ENCODE measurements at regions of chr4 and their contacts with region 1.

Region 1: GRCh38 chr4:140851032-140851636 is 94.9 kb upstream of the TBC1D9 start:
- DNase-seq: peak; percentile 65
- ATAC-seq: peak; percentile 91
- H3K4me3 ChIP-seq: no peak overlapping the region
- H3K27ac ChIP-seq: no peak overlapping the region
- H3K4me1 ChIP-seq: peaks cover 2 to 3% of the 10 kb centered on the region in 2 experiments; a peak in 3 of 4 replicates
- H3K27me3 ChIP-seq: no peaks in the 10 kb centered on the region
- CTCF ChIP-seq: peak; percentile 71 to 86 (median 82); a peak in 5 of 6 replicates
- POLR2A ChIP-seq: no peak
- RAD21 ChIP-seq: peak; percentile 96

Region 2: DNA sequence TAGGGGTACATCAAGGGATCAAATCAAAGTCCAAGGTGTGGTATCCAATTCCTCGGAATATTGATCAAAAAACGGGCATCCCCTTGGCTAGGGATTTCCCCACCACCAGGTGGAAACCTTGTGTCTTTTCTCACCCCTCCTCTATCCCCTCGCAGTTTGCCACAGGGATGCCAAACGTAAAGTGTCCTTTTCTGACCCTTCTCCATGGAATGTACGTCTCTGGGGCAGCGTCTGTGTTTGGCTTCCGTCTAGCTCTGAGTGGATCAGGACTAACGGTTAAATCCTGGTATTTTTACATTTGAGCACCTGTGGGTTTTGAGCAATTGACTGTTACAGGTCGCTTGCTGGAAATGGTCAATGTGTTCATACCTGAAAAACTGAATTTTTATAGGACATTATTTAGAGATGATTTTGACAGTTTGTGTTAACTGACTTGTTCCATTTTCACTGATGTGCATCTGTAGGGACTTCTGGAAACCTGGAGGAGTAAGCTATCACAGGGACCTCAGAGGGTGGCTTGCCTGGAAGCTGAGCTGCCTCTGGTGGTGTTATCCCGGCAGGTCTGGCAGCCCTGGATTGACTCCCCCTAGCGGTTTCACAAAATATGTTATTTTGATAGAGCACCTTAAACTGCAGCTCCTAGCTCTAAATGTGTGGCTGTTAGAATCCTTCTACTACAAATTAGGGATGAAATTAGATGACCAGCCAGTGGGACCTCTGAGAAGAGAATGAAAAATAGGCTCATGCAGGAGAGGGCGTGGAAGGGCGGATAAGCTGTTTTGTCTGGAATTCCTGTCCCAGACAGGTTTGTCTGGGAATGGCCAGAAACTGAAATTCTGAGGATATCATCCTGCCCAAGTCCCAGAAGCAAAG is 1194.3 kb before region 1 on chr4:
- CTCF ChIA-PET with region 1: interaction called, 4 read pairs
- POLR2A ChIA-PET with region 1: no interaction called
- RAD21 ChIA-PET with region 1: no interaction called
- intact Hi-C with region 1: loop called (anchors 2 kb)
- DNase-seq: peak; percentile 74
- ATAC-seq: peak; percentile 90
- H3K4me3 ChIP-seq: peak overlapping the region; percentile 26 to 39
- H3K27ac ChIP-seq: no peak overlapping the region
- H3K4me1 ChIP-seq: peaks cover 3 to 22% of the 10 kb centered on the region in 2 experiments; a peak in 3 of 4 replicates
- H3K27me3 ChIP-seq: no peaks in the 10 kb centered on the region
- CTCF ChIP-seq: peak; percentile 77 to 93 (median 92)
- POLR2A ChIP-seq: no peak
- RAD21 ChIP-seq: peak; percentile 72

Region 3: DNA sequence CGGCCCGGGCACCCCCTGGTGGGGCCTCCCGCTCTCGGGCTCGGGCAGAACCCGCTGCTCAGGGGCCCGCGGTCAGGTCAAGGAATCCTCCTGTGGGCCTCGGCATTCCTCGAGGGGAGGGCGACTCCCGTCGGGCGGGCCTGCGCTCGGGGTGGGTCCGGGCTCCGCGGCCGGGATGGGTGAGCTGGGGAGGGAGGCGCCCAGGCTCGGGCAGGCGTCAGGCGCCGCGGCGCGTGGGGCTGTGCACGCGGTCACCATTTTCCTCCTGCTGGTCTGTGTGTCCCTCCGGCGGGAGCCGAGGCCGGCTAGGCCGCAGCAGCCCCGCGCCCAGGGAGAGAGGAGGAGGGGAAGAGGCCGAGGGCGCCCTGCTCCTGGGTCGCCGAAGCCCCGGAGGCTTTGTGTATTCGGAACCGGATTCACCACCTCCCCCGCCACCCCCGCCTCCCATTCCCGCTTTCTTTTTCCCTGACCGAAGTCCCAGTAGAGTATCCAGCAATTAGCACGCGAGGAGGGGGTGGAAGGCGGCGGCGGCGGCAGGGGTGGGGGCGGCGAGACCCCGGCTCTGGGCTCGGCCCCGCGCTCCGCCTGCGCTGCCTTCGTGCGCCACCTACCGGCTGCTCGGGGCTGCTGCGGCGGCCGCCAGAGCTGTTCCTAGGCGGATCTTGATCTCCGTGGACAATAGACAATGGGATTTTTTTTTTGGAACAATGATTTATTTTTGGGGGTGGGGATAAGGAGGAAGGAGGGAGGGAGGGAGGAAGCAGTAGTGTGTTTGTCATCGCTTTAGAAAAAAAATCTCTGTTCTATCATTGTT is 598.2 kb before region 1 on chr4:
- CTCF ChIA-PET with region 1: no interaction called
- POLR2A ChIA-PET with region 1: no interaction called
- RAD21 ChIA-PET with region 1: no interaction called
- intact Hi-C with region 1: loop called (anchors 10 kb)
- DNase-seq: peak; percentile 43
- ATAC-seq: peak; percentile 85
- H3K4me3 ChIP-seq: peak overlapping the region; percentile 43 to 56
- H3K27ac ChIP-seq: peak overlapping the region; percentile 51; the same call in 1 of the 2 replicates
- H3K4me1 ChIP-seq: peaks cover 2 to 47% of the 10 kb centered on the region in 2 experiments; a peak in 3 of 4 replicates
- H3K27me3 ChIP-seq: no peaks in the 10 kb centered on the region
- CTCF ChIP-seq: peak; percentile 53 to 92 (median 76); a peak in 5 of 6 replicates
- POLR2A ChIP-seq: no peak
- RAD21 ChIP-seq: peak; percentile 85

Region 4: DNA sequence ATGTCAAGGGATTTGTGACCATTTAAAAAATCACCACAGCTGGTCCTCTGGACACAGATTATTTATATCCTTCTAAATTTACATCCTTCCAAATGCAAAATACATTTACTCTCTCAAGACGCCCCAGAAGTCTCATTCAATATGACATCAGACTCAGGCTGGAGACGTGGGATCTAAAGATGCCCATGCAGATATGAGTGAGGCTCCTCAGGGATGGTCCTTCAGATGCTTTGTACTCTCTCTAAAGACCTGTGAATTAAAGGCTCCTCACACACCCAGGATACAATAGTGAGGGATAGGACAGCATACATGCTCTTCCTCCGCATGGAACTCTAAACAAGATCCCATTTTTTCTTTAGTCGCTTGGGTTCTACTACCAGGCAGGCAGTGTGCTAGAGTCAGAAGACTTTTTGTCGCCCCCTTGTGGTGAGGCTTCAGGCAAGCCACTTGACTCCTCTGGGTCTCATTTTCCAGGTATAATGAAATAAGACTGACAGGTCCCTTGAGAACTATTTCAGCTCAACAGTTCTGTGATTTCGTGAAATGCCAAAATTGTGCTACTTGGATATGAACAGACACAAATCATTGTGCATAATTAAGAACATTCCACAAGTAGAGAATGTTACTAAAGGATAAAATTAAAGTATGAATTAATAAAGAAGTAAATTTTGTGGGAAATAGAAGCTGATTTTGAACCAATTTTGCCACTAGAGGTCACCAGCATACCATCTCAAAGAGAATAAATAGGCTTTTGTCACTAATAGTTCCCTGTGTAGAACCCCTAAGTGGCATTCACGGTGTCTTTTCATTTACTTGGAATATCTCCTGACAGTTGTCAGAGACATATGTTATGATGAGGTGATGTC is 491.3 kb before region 1 on chr4:
- CTCF ChIA-PET with region 1: interaction called, 23 read pairs
- POLR2A ChIA-PET with region 1: no interaction called
- RAD21 ChIA-PET with region 1: interaction called, 3 to 6 read pairs
- intact Hi-C with region 1: loop called (anchors 1 kb)
- DNase-seq: peak; percentile 83
- ATAC-seq: peak; percentile 99
- H3K4me3 ChIP-seq: no peak overlapping the region
- H3K27ac ChIP-seq: no peak overlapping the region
- H3K4me1 ChIP-seq: no peaks in the 10 kb centered on the region
- H3K27me3 ChIP-seq: no peaks in the 10 kb centered on the region
- CTCF ChIP-seq: peak; percentile 87 to 97 (median 93)
- POLR2A ChIP-seq: no peak
- RAD21 ChIP-seq: peak; percentile 64

Region 5: GRCh38 chr4:140595065-140595464 is 256.1 kb before region 1 on chr4:
- CTCF ChIA-PET with region 1: interaction called, 13 read pairs
- POLR2A ChIA-PET with region 1: no interaction called
- RAD21 ChIA-PET with region 1: no interaction called
- intact Hi-C with region 1: loop called (anchors 1 kb)
- DNase-seq: peak; percentile 37
- ATAC-seq: peak; percentile 100
- H3K4me3 ChIP-seq: no peak overlapping the region
- H3K27ac ChIP-seq: no peak overlapping the region
- H3K4me1 ChIP-seq: 0 out of 4 replicates have a peak, but pooled peaks cover 0 to 4% of the 10 kb centered on the region in 2 experiments
- H3K27me3 ChIP-seq: no peaks in the 10 kb centered on the region
- CTCF ChIP-seq: peak; percentile 68 to 77 (median 72); a peak in 5 of 6 replicates
- POLR2A ChIP-seq: no peak
- RAD21 ChIP-seq: peak; percentile 76

Region 6: DNA sequence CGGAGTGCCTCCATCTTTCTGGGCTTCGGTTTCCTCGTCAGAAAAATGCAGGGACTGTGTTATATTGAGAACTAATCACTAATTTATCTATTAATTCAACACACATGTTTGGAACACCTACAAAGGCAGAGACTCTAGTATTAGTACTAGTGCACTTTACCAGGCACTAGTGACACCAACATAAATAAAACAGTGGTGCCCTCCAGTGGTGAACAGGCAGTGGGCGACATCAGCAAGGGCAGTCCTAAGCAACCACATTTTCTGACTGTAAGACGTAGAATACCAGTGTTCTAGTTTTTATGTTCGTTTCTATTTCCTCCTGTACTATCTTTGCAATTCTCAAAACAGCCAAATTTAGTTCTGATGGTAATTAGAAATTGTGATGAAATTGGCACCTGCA is 213.3 kb before region 1 on chr4:
- CTCF ChIA-PET with region 1: no interaction called
- POLR2A ChIA-PET with region 1: no interaction called
- RAD21 ChIA-PET with region 1: no interaction called
- intact Hi-C with region 1: loop called (anchors 2 kb)
- DNase-seq: peak; percentile 35
- ATAC-seq: peak; percentile 86
- H3K4me3 ChIP-seq: no peak overlapping the region
- H3K27ac ChIP-seq: no peak overlapping the region
- H3K4me1 ChIP-seq: peaks cover 14 to 19% of the 10 kb centered on the region in 2 experiments
- H3K27me3 ChIP-seq: no peaks in the 10 kb centered on the region
- CTCF ChIP-seq: peak; percentile 65 to 88 (median 76); a peak in 5 of 6 replicates
- POLR2A ChIP-seq: no peak
- RAD21 ChIP-seq: peak; percentile 79

Region 7: DNA sequence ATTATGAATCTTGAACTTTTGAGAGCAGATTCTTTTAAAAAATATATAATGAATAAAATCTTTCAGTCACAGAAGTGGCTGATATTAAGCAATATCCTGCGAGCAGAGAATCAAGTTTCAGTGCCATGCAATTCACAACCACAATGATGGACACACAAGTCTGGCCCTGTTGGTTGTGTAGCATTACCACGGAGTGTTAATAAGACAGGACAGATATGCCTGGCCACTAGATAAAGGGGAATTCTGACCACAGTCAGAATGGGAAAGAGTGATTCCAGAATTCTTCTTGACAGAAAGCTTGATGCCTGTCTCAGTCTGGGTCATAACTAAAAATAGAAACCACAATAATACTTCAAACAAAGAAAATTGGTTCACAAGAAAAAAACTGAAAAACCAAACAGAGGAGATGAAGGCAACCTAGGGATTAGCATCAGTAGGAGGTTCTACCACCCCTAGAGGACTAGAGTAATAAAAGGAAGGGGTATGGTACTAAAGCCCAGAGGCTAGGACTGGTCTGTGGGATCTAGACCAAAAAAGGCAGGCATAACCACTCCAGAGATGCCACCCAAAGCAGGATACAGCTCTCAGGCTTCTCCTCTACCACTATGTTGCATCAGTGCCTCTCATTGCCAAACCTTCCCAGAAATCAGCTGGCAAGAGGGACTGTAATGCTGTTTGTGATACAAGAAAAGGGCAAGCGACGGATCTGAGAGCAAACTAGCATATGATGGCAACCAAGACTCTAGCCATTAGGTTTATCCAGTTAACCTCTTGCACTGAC is 223.2 kb after region 1 on chr4:
- CTCF ChIA-PET with region 1: no interaction called
- POLR2A ChIA-PET with region 1: no interaction called
- RAD21 ChIA-PET with region 1: no interaction called
- intact Hi-C with region 1: no loop called
- DNase-seq: no peak
- ATAC-seq: no peak
- H3K4me3 ChIP-seq: no peak overlapping the region
- H3K27ac ChIP-seq: no peak overlapping the region
- H3K4me1 ChIP-seq: no peaks in the 10 kb centered on the region
- H3K27me3 ChIP-seq: no peaks in the 10 kb centered on the region
- CTCF ChIP-seq: no peak
- POLR2A ChIP-seq: no peak
- RAD21 ChIP-seq: no peak